Uterus (tissue), 4 donors: ENCODE measurements at regions of chr9 and their contacts with region 1.

Region 1: GRCh38 chr9:131320031-131320685 is 30.6 kb downstream of the PLPP7 start:
- DNase-seq: peak in 1 of 2 donors; percentile 52
- H3K4me3 ChIP-seq: no peak overlapping the region
- H3K27ac ChIP-seq: peak overlapping the region in 1 of 2 donors; percentile 33
- H3K4me1 ChIP-seq: no peaks in the 10 kb centered on the region
- H3K27me3 ChIP-seq: no peaks in the 10 kb centered on the region
- CTCF ChIP-seq: no peak
- POLR2A ChIP-seq: no peak

Region 2: DNA sequence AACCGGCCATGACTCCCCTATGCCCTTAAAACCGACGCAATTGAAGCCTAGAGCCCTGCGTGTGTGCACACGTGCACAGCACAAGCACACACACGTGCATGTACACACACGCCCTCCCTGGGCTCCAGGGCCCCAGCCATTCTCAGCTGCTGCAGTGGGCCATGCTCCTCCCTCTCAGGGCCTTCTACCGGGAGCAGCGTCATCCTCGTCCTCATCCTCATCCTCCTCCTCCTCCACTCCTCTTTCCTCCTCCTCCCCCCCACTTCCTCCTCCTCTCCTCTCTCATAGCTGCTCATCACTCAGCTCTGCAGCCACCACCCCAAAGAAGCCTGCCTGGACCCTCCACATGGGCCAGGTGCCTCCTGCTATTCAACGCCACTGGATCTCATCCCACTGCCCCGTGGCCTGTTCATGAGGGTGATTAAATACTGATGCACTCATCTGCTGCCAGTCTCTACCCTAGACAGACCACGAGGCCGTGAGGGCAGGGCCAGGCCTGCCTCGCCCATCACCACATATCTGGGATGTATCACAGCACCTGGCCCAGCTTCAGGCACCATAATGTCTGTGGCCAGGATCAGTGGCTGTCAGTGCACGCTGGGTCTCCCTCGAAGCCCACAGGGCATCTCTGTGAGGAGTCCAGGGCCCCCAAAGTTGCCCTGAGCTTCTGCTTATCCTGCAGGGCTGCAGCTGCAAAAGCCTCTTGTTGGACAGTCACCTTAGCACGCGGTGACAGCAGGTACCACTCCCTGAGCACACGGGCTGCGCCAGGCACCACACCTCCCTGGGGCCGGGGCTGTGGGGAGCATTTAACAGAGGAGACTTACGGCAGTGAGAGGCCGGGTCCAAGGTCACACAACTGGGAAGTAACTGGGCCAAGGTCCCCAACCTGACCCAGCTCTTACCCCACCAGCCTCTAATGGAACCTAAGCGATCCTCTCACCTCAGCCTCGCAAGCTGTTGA is 53.6 kb before region 1 on chr9:
- intact Hi-C with region 1: loop called (anchors 10 kb)
- DNase-seq: no peak
- H3K4me3 ChIP-seq: no peak overlapping the region
- H3K27ac ChIP-seq: no peak overlapping the region
- H3K4me1 ChIP-seq: no peaks in the 10 kb centered on the region
- H3K27me3 ChIP-seq: no peaks in the 10 kb centered on the region
- CTCF ChIP-seq: no peak
- POLR2A ChIP-seq: no peak